Activated CD4-positive, alpha-beta T cell treated with anti-CD3 and anti-CD28 coated beads, Interleukin-2, amount 10 ng/mL, durations not matched to agents 24 days and 14 days (primary cell): ENCODE measurements at regions of chr14 and their contacts with region 1.

Region 1: GRCh38 chr14:35438910-35439713 is 34.6 kb upstream of the NFKBIA start:
- DNase-seq: no peak
- H3K4me3 Mint-ChIP-seq: no peak overlapping the region
- H3K27ac Mint-ChIP-seq: no peak overlapping the region
- H3K4me1 Mint-ChIP-seq: peaks cover 7% of the 10 kb centered on the region
- H3K27me3 Mint-ChIP-seq: peaks cover 5% of the 10 kb centered on the region

Region 2: GRCh38 chr14:35533357-35534207 is 94.5 kb after region 1 on chr14 and contains the start of gene INSM2:
- intact Hi-C with region 1: loop called (anchors 10 kb)
- DNase-seq: peak; percentile 90
- H3K4me3 Mint-ChIP-seq: peak within 1 kb of the TSS; percentile 74
- H3K27ac Mint-ChIP-seq: no peak within 1 kb of the TSS
- H3K4me1 Mint-ChIP-seq: peaks cover 8% of the 10 kb centered on the region
- H3K27me3 Mint-ChIP-seq: peaks cover 66% of the 10 kb centered on the region
- total RNA-seq, gene INSM2: not detected in 2 replicates

Region 3: GRCh38 chr14:35814371-35815005 is 375.4 kb after region 1 on chr14:
- intact Hi-C with region 1: loop called (anchors 5 kb)
- DNase-seq: peak; percentile 95
- H3K4me3 Mint-ChIP-seq: no peak overlapping the region
- H3K27ac Mint-ChIP-seq: no peak overlapping the region
- H3K4me1 Mint-ChIP-seq: peaks cover 1% of the 10 kb centered on the region
- H3K27me3 Mint-ChIP-seq: peaks cover 4% of the 10 kb centered on the region